T-cell (primary cell): ENCODE measurements at regions of chr2 and their contacts with region 1.

Region 1: GRCh38 chr2:18630101-18630500 is 40.7 kb upstream of the NT5C1B start:
- DNase-seq: no peak
- ATAC-seq: no peak
- H3K4me3 ChIP-seq: no peak overlapping the region
- H3K4me3 Mint-ChIP-seq: no peak overlapping the region
- H3K27ac ChIP-seq: no peak overlapping the region
- H3K27ac Mint-ChIP-seq: no peak overlapping the region
- H3K4me1 ChIP-seq: no peaks in the 10 kb centered on the region
- H3K4me1 Mint-ChIP-seq: no peaks in the 10 kb centered on the region
- H3K27me3 ChIP-seq: no peaks in the 10 kb centered on the region
- H3K27me3 Mint-ChIP-seq: no peaks in the 10 kb centered on the region

Region 2: DNA sequence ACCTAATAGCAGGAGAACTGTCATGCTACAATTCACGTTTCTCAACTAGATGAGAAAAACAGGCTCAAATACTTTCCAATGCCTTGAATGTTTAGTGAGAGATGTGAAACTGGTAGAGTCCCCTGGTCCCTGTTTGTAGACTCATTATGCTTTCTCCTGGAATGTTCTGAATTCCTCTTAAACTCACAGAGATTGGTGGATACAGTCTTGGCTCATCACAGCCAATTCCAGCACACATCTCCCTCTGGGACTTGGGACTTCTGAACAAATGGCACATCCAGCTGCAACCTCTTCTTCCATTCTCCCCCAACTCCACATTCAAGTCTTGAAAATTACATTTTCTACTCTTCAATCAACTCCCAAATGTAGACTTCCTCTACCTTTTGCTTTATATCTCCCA is 17.6 kb after region 1 on chr2:
- CTCF ChIA-PET with region 1: no interaction called
- POLR2A ChIA-PET with region 1: interaction called in 1 of 2 experiments, 10 read pairs
- DNase-seq: no peak
- ATAC-seq: no peak
- H3K4me3 ChIP-seq: no peak overlapping the region
- H3K4me3 Mint-ChIP-seq: no peak overlapping the region
- H3K27ac ChIP-seq: no peak overlapping the region
- H3K27ac Mint-ChIP-seq: no peak overlapping the region
- H3K4me1 ChIP-seq: no peaks in the 10 kb centered on the region
- H3K4me1 Mint-ChIP-seq: no peaks in the 10 kb centered on the region
- H3K27me3 ChIP-seq: no peaks in the 10 kb centered on the region
- H3K27me3 Mint-ChIP-seq: no peaks in the 10 kb centered on the region